Activated CD8-positive, alpha-beta memory T cell treated with anti-CD3 and anti-CD28 coated beads, Interleukin-2, amount 10 ng/mL, durations not matched to agents 7 days and 5 days (primary cell): ENCODE measurements at regions of chr16 and their contacts with region 1.

Region 1: DNA sequence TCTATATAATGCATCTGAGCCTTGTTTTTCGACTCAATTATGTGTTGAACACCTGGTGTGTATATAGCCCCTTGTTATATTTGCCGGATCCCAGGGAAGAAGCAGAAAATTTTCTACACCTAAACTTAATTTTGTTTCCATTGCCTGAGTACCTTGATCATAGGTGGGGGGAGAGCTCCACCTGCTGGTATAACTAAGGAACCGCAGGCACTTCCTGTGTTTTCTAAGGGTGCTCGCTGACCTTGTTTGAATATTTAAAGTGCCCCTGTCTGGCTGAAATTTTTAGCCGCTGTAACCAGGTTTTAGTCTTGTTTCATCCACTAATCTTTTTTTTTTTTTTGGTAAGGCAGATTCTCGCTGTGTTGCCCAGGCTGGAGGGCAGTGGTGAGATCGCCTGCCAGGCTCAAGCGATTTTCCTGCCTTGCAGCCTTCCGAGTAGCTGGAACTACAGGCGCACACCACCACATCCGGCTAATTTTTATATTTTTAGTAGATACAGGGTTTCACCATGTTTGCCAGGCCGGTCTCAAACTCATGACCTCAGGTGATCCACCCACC is 6.5 kb upstream of the NUBP1 start:
- DNase-seq: peak; percentile 80
- ATAC-seq: peak; percentile 43
- H3K4me3 Mint-ChIP-seq: peak overlapping the region; percentile 48
- H3K27ac Mint-ChIP-seq: peak overlapping the region; percentile 77
- H3K4me1 Mint-ChIP-seq: peaks cover 49% of the 10 kb centered on the region
- H3K27me3 Mint-ChIP-seq: peaks cover 3% of the 10 kb centered on the region

Region 2: DNA sequence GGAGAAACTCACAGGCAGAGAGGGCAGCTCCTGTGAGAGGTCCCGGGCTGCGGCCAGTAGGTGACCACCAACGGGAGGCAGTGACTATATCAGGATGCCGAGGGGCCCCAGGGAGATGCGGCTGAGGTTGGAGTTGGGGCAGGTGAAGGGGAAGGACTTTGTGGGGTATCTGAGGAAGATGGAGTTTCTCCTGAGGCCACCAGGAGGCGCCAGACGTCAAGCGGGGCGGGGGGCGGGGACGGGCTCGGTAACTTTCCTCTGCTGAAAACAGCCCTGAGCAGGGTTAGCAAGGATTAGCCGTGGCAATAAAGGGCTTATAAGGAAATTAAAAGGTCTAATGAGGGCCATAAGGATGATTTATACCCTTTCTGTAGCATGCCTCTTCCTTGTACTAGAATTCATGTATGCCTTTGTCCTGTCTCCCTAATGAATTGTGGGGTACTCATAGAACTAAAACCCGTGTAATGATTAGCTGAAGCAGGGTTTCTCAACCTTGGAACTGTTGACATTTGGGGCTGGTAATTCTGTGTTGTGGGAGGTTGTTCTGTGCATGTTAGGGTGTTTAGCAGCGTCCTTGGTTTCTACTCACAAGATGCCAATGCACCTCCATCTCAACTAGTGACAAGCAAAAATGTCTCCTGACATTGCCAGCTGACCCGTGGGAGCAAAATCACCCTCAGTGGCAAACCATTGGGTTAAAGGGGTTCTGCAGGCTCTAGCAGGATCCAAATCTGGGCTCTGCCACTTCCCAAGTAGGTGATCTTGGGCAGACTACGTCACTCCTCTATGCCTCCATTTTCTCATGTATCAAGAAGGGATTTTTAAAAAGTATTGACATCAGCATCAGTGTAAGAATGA is 480.1 kb before region 1 on chr16:
- CTCF ChIA-PET with region 1: interaction called, 13 read pairs
- DNase-seq: peak; percentile 56
- ATAC-seq: peak; percentile 57
- H3K4me3 Mint-ChIP-seq: no peak overlapping the region
- H3K27ac Mint-ChIP-seq: no peak overlapping the region
- H3K4me1 Mint-ChIP-seq: peaks cover 6% of the 10 kb centered on the region
- H3K27me3 Mint-ChIP-seq: peaks cover 3% of the 10 kb centered on the region

Region 3: GRCh38 chr16:10509534-10510025 is 227.6 kb before region 1 on chr16:
- CTCF ChIA-PET with region 1: interaction called, 66 read pairs
- DNase-seq: peak; percentile 75
- ATAC-seq: peak; percentile 84
- H3K4me3 Mint-ChIP-seq: no peak overlapping the region
- H3K27ac Mint-ChIP-seq: no peak overlapping the region
- H3K4me1 Mint-ChIP-seq: peaks cover 3% of the 10 kb centered on the region
- H3K27me3 Mint-ChIP-seq: peaks cover 19% of the 10 kb centered on the region

Region 4: GRCh38 chr16:10668322-10669045 is 68.7 kb before region 1 on chr16:
- CTCF ChIA-PET with region 1: interaction called, 10 read pairs
- DNase-seq: no peak
- ATAC-seq: peak; percentile 36
- H3K4me3 Mint-ChIP-seq: no peak overlapping the region
- H3K27ac Mint-ChIP-seq: no peak overlapping the region
- H3K4me1 Mint-ChIP-seq: no peaks in the 10 kb centered on the region
- H3K27me3 Mint-ChIP-seq: peaks cover 14% of the 10 kb centered on the region

Region 5: DNA sequence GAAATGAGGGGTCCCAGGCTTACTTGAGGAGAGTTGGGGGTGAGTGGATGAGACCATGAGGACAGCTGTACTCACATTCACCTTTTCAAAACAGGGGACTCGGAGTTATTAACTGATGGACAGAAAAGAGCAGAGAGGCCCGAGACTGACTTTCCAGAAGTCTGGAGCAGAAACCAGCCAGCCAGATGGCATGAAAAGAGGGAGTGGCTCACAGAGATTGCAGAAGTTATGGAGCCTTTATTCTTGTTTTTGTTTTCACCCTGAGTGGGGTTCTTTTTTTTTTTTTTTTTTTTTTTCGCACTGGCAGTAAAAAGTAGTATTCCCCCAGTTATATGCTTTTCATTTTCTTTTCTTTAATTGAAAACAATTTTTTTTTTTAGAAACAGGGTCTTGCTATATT is 62.6 kb after region 1 on chr16:
- CTCF ChIA-PET with region 1: no interaction called
- DNase-seq: no peak
- ATAC-seq: no peak
- H3K4me3 Mint-ChIP-seq: no peak overlapping the region
- H3K27ac Mint-ChIP-seq: no peak overlapping the region
- H3K4me1 Mint-ChIP-seq: no peaks in the 10 kb centered on the region
- H3K27me3 Mint-ChIP-seq: peaks cover 10% of the 10 kb centered on the region

Region 6: DNA sequence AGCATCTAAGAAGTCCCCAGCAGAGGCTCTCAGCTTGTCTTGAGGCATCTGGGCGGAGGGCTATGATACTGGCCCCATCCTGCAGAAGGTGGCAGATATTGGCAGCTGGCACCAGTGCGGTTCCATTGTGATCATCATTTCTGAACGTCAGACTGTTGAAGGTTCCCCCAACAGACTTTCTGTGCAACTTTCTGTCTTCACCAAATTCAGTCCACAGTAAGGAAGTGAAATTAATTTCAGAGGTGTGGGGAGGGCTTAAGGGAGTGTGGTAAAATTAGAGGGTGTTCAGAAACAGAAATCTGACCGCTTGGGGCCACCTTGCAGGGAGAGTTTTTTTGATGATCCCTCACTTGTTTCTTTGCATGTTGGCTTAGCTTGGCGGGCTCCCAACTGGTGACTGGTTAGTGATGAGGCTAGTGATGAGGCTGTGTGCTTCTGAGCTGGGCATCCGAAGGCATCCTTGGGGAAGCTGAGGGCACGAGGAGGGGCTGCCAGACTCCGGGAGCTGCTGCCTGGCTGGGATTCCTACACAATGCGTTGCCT is 139.7 kb after region 1 on chr16 and contains the start of gene CIITA:
- CTCF ChIA-PET with region 1: interaction called, 52 read pairs
- DNase-seq: peak; percentile 91
- ATAC-seq: peak; percentile 64
- H3K4me3 Mint-ChIP-seq: peak within 1 kb of the TSS; percentile 90
- H3K27ac Mint-ChIP-seq: peak within 1 kb of the TSS; percentile 92
- H3K4me1 Mint-ChIP-seq: peaks cover 74% of the 10 kb centered on the region
- H3K27me3 Mint-ChIP-seq: no peaks in the 10 kb centered on the region
- total RNA-seq, gene CIITA: 68.7 to 103 TPM

Region 7: GRCh38 chr16:10918294-10919002 is 181.3 kb after region 1 on chr16:
- CTCF ChIA-PET with region 1: interaction called, 15 read pairs
- DNase-seq: peak; percentile 91
- ATAC-seq: peak; percentile 72
- H3K4me3 Mint-ChIP-seq: no peak overlapping the region
- H3K27ac Mint-ChIP-seq: peak overlapping the region; percentile 42
- H3K4me1 Mint-ChIP-seq: peaks cover 12% of the 10 kb centered on the region
- H3K27me3 Mint-ChIP-seq: no peaks in the 10 kb centered on the region